Head of caudate nucleus (tissue), 42 donors: ENCODE measurements at regions of chr11 and their contacts with region 1.

Region 1: GRCh38 chr11:119373921-119374631 is 7.4 kb downstream of the USP2 start:
- DNase-seq: peak; percentile 75 to 96 (median 89)

Region 2: DNA sequence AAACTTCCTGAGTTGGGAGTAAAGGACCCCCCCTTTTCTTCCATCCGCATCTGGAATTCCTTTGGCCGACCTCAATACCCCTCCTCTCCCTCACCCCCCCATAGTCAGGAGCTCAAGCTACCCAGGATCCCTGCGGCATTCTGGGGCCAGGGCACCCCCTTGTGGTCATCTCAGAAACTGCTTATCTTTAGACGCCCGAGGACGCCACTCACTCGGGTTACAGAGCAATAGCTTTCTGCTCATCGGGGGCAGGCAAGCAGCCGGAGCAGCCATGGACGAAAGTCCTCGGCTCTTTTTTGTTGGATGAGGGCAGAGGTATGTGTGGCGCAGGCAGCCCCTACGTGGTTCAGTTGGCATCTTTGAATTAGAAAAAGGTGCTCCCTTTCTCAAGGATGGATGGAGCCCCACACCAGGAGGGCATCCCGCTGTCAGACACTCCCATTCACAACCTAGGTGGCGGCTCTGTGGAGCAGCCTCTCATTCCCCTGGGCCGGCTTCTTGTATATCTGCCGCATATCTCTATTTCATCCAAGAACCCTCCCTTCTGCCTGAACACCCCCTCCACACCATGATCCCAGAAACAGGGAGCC is 35.7 kb before region 1 on chr11:
- intact Hi-C with region 1: loop called (anchors 5 kb)
- DNase-seq: peak; percentile 72 to 94 (median 86)

Region 3: GRCh38 chr11:119356349-119357031 is 17.6 kb before region 1 on chr11:
- intact Hi-C with region 1: no loop called
- DNase-seq: peak in 40 of 42 donors; percentile 60 to 89 (median 78)

Region 4: GRCh38 chr11:119594639-119595249 is 220.7 kb after region 1 on chr11:
- intact Hi-C with region 1: no loop called
- DNase-seq: no peak